AG04450 (cell line): ENCODE measurements at regions of chr15 and their contacts with region 1.

Region 1: DNA sequence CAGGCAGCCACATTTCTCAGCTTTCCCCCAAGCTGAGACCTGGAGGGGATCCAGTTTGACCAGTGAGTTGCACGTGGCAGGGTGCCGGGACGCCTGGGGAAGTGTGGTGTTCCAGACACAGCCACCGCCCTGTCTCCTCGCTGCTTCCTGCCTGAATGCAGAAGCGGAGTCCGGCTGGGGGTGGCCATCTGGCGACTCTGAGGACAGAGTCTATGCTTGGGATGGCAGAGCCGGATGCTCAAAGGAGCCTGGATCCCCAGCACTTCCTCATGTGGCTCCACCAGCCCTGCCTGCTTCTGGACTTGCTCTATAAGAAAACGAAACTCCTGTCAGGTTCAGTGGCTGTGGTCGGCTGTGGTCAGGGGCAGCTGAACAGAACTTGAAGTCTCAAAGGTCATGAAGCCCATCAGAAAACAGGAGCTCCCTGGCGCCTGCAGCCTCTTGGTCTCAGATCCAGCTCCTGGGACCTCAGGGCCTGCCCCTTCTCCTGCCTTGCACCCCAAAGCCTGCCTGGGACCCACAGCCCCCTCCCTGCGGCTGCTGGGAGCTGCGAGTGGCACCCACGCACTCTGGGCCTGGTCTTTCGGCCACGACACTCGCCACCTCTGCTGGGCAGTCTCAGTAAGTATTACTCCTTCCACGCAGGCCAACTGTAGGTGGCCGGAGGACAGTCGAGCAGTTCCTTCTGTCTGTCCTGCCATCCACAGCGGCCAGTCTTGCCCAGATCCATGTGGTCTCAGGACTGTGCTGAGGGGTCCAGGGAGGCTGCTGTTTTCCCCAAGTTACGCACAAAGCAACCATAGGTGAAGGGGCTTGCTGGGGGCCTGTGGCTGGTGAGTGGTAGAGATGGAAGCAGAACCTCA is 112.8 kb upstream of the MEF2A start:
- DNase-seq: no peak
- H3K4me3 ChIP-seq: no peak overlapping the region
- H3K27ac ChIP-seq: no peak overlapping the region
- H3K27me3 ChIP-seq: no peaks in the 10 kb centered on the region
- CTCF ChIP-seq: no peak

Region 2: GRCh38 chr15:99343881-99344551 is 109.0 kb before region 1 on chr15:
- CTCF ChIA-PET with region 1: no interaction called
- POLR2A ChIA-PET with region 1: interaction called, 13 read pairs
- DNase-seq: no peak
- H3K4me3 ChIP-seq: no peak overlapping the region
- H3K27ac ChIP-seq: no peak overlapping the region
- H3K27me3 ChIP-seq: no peaks in the 10 kb centered on the region
- CTCF ChIP-seq: peak; percentile 15; the same call in 1 of the 2 replicates

Region 3: DNA sequence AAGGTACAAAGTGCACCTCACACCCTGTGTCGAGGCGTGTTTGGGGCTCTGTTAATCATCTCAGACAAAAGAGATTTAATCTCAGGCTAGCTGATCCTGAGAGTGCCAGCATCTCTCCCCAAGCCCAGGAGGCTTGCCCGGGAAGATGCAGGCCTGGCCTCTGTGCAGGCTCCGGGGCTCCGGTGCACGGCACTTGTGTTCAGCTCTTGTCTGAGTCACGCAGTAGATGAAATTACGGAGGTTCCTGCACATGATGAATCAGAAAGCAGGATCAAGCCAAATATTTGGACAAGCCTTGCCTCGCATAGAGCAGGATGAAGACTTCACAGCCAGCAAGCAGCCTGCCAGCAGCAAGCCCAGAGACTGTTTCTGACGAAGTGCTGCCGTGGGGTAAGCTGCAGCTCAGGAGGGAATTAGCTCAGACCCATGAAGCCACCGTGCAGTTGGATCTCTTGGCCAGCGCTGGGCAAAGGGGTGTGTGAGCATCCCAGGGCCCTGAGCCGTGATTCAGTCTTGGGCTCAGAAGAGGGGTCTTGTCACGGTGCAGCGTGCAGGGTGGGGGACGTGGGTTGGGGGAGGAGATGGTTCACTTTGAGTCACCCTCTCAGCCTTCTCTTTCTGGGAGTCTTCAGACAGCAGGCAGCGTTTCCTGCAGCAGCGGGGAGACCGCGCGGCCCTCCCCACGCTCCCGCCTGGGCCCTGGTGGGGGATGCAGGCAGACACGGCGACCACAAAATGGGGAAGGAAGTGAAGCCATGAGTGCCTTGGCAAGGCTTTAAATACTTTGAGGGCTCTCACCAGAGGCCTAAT is 23.6 kb after region 1 on chr15:
- CTCF ChIA-PET with region 1: no interaction called
- POLR2A ChIA-PET with region 1: interaction called, 30 read pairs
- DNase-seq: peak; percentile 97
- H3K4me3 ChIP-seq: peak overlapping the region; percentile 51
- H3K27ac ChIP-seq: peak overlapping the region; percentile 92
- H3K27me3 ChIP-seq: no peaks in the 10 kb centered on the region
- CTCF ChIP-seq: no peak